A549 (cell line): ENCODE measurements at regions of chr3 and their contacts with region 1.

Region 1: DNA sequence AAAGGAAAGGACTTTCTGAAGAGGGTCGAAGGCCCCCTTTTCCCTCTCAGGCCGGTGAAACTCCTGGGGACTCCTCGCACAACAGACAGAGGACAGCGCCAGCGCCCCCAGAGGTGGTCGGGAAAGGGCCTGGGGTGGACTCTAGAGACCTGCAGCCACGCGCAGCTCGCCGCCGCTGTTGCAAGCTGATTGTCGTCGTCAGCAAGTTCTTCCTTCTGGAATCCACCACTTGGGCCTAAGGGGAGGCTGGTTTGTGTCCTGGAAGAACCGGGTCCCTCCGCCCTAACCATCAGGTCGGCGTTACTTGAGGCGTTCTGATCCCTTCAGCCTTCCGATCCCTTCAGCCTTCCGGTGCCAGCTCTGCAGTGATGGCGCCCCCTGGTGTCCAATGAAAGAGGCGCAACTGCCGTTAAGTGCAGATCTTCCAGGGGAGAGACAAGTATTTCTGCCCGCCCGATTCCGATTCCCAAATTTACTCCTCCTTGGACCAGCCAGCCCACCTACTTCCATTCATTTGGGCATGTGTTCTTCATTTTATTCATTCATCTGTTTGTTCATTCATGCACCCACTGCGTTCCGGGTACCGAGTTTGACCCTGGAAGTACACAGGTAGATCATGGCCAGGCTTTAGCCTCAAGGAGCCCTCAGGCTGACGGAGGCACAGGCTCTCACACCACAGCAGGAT is 77.2 kb upstream of the SLC6A11 start:
- DNase-seq: peak; percentile 61 to 77
- ATAC-seq: peak; percentile 91 to 96
- H3K4me3 ChIP-seq: peak overlapping the region; percentile 30
- H3K27ac ChIP-seq: peak overlapping the region in 1 of 2 experiments; percentile 65; a peak in 2 of 6 replicates
- H3K4me1 ChIP-seq: no peaks in the 10 kb centered on the region
- CTCF ChIP-seq: peak; percentile 89
- EP300 ChIP-seq: no peak
- POLR2A ChIP-seq: no peak
- RAD21 ChIP-seq: peak; percentile 68 to 76

Region 2: GRCh38 chr3:10408680-10409079 is 330.1 kb before region 1 on chr3:
- CTCF ChIA-PET with region 1: interaction called, 149 read pairs
- POLR2A ChIA-PET with region 1: no interaction called
- DNase-seq: no peak
- ATAC-seq: no peak
- H3K4me3 ChIP-seq: no peak overlapping the region
- H3K27ac ChIP-seq: no peak overlapping the region
- H3K4me1 ChIP-seq: no peaks in the 10 kb centered on the region
- CTCF ChIP-seq: no peak
- EP300 ChIP-seq: no peak
- POLR2A ChIP-seq: no peak
- RAD21 ChIP-seq: no peak

Region 3: DNA sequence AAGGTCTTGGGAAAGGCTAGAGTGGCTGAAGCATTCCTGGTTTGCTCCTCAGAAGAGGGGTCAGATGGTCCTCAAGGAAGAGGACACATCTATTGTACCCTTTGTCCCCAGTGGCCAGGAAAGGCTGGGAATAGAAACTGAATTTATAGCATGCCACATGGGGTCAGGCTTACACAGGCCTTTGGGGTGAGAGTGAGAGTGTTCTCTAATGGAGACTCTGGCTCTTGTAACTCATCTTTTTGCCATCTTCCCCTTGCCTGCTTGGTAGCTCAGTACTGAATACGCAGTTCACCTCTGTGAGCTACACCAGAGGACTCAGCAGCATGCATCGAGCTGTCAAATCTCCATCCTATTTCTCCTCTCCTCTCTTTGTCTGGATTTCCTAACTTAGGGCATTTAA is 321.0 kb before region 1 on chr3:
- CTCF ChIA-PET with region 1: interaction called, 149 read pairs
- POLR2A ChIA-PET with region 1: interaction called, 3 read pairs
- DNase-seq: peak; percentile 37 to 54
- ATAC-seq: peak; percentile 64 to 78; a peak in 5 of 6 replicates
- H3K4me3 ChIP-seq: no peak overlapping the region
- H3K27ac ChIP-seq: no peak overlapping the region
- H3K4me1 ChIP-seq: no peaks in the 10 kb centered on the region
- CTCF ChIP-seq: peak; percentile 63
- EP300 ChIP-seq: no peak
- POLR2A ChIP-seq: no peak
- RAD21 ChIP-seq: peak; percentile 74 to 75

Region 4: GRCh38 chr3:10665592-10665991 is 73.2 kb before region 1 on chr3:
- CTCF ChIA-PET with region 1: interaction called, 14 read pairs
- POLR2A ChIA-PET with region 1: no interaction called
- DNase-seq: no peak
- ATAC-seq: peak; percentile 42 to 53; a peak in 3 of 6 replicates
- H3K4me3 ChIP-seq: no peak overlapping the region
- H3K27ac ChIP-seq: no peak overlapping the region
- H3K4me1 ChIP-seq: no peaks in the 10 kb centered on the region
- CTCF ChIP-seq: no peak
- EP300 ChIP-seq: no peak
- POLR2A ChIP-seq: no peak
- RAD21 ChIP-seq: no peak

Region 5: DNA sequence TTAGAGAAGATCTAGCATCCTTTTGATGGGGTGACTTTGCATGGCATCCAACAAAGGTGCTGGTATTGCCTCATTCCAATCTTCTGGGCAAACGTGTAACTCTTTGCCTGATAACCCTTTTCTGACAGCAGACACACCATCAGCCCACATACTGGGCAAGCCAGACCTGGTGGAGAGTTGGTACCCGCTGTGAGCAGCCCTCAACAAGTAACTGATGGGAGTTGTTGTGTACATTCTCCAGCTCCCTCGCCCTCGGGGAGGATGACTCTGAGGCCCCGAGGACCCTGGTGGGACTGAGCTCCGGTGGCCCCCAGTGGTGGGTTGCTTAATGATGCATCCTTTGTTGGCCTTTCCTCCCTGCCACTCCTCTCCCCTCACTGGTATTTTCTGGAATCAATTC is 25.2 kb before region 1 on chr3:
- CTCF ChIA-PET with region 1: interaction called, 11 read pairs
- POLR2A ChIA-PET with region 1: no interaction called
- DNase-seq: no peak
- ATAC-seq: no peak
- H3K4me3 ChIP-seq: no peak overlapping the region
- H3K27ac ChIP-seq: no peak overlapping the region
- H3K4me1 ChIP-seq: no peaks in the 10 kb centered on the region
- CTCF ChIP-seq: no peak
- EP300 ChIP-seq: no peak
- POLR2A ChIP-seq: no peak
- RAD21 ChIP-seq: no peak

Region 6: DNA sequence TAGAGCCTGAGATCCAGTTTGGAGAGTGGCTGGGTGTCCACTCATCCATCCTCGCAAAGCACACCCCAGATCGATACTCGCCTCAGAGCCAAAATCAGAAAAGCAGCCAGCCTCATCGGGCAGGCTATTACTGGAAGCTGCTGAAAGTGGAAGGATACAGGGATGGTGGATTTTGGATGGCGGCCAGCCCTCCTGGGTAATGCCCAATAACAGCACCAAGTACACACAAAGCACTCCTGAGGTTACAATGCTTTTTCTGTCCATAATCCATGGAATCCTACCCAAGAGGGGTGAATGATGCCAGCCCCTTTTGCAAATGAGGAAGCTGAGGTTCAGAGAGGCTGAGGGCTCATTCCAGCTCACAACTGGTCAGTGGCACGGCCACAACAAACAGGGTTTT is 15.9 kb before region 1 on chr3:
- CTCF ChIA-PET with region 1: interaction called, 60 read pairs
- POLR2A ChIA-PET with region 1: no interaction called
- DNase-seq: no peak
- ATAC-seq: no peak
- H3K4me3 ChIP-seq: no peak overlapping the region
- H3K27ac ChIP-seq: no peak overlapping the region
- H3K4me1 ChIP-seq: no peaks in the 10 kb centered on the region
- CTCF ChIP-seq: no peak
- EP300 ChIP-seq: no peak
- POLR2A ChIP-seq: no peak
- RAD21 ChIP-seq: no peak